ENCODE measurements at regions of chrX and their contacts with region 1.

Region 1: DNA sequence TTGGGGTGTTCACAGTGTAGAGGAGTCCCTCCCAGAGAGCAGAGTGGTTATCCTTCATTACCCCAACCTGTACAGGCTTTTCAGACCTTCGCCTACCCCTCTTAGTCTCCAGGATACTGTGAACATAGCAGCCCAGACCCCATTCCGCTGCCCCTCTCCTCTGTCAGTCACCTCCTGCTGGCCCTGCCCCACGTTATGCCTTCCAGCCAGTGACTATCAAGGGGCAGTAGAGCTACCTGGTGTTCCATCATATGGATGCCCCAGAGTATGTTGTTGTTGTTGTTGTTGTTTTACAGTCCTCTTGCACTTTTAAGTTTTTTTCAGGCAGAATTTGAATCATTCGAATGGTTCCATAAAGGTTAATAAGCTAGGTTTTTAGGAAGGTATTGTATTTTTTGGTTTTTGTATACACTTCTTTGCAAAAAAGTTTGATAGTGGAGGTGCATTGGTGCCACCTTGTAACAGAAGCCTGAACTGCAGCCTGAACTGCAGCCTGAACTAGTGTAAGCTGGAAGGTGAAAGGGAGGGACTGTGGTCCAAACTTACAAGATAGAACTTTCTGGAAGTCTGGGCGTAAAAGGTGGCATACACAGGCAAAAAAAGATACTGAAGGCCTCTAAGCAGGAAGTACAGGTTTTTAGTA is 101.4 kb upstream of the RAB40AL start:
- DNase-seq: peak; percentile 54
- H3K4me3 ChIP-seq: no peak overlapping the region
- H3K27ac ChIP-seq: no peak overlapping the region
- H3K4me1 ChIP-seq: peaks cover 3% of the 10 kb centered on the region
- H3K27me3 ChIP-seq: no peaks in the 10 kb centered on the region
- CTCF ChIP-seq: peak; percentile 39 to 53
- POLR2A ChIP-seq: no peak

Region 2: GRCh38 chrX:102643275-102643674 is 192.3 kb before region 1 on chrX:
- CTCF ChIA-PET with region 1: interaction called, 5 read pairs
- POLR2A ChIA-PET with region 1: no interaction called
- dilution Hi-C with region 1: no loop called
- intact Hi-C with region 1: loop called (anchors 1 kb)
- DNase-seq: no peak
- H3K4me3 ChIP-seq: no peak overlapping the region
- H3K27ac ChIP-seq: no peak overlapping the region
- H3K4me1 ChIP-seq: no peaks in the 10 kb centered on the region
- H3K27me3 ChIP-seq: no peaks in the 10 kb centered on the region
- CTCF ChIP-seq: no peak
- POLR2A ChIP-seq: no peak

Region 3: GRCh38 chrX:102712952-102713625 is 122.5 kb before region 1 on chrX:
- CTCF ChIA-PET with region 1: interaction called, 3 read pairs
- POLR2A ChIA-PET with region 1: no interaction called
- dilution Hi-C with region 1: no loop called
- intact Hi-C with region 1: loop called (anchors 5 kb)
- DNase-seq: peak; percentile 58
- H3K4me3 ChIP-seq: peak overlapping the region; percentile 51 to 73 (median 53)
- H3K27ac ChIP-seq: no peak overlapping the region
- H3K4me1 ChIP-seq: no peaks in the 10 kb centered on the region
- H3K27me3 ChIP-seq: peaks cover 3% of the 10 kb centered on the region in 2 experiments
- CTCF ChIP-seq: peak; percentile 38 to 54
- POLR2A ChIP-seq: no peak

Region 4: DNA sequence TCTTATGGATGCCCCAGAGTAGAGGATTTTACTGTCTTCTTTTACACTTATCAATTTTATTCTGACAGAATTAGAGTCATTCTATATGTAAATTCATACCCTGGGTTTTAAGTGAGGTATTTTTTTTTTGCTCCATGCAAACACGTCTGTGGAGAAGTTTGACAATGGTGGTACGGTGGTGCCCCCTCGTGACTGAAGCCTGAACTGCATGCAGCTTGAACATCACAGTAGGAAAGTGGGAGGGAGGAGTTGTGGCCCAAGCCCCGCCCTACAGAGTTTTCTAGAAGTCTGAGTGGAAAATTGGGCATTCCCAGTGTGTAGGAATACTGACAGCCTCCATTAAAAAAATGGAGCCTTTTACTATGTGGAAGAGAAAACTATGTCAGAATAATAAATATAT is 28.1 kb after region 1 on chrX:
- CTCF ChIA-PET with region 1: interaction called, 13 read pairs
- POLR2A ChIA-PET with region 1: no interaction called
- dilution Hi-C with region 1: no loop called
- intact Hi-C with region 1: loop called (anchors 1 kb)
- DNase-seq: peak; percentile 87
- H3K4me3 ChIP-seq: no peak overlapping the region
- H3K27ac ChIP-seq: no peak overlapping the region
- H3K4me1 ChIP-seq: no peaks in the 10 kb centered on the region
- H3K27me3 ChIP-seq: no peaks in the 10 kb centered on the region
- CTCF ChIP-seq: peak; percentile 63 to 74
- POLR2A ChIP-seq: no peak

Measured in endothelial cell of umbilical vein (primary cell).